BJ (cell line): ENCODE measurements at regions of chr2 and their contacts with region 1.

Region 1: DNA sequence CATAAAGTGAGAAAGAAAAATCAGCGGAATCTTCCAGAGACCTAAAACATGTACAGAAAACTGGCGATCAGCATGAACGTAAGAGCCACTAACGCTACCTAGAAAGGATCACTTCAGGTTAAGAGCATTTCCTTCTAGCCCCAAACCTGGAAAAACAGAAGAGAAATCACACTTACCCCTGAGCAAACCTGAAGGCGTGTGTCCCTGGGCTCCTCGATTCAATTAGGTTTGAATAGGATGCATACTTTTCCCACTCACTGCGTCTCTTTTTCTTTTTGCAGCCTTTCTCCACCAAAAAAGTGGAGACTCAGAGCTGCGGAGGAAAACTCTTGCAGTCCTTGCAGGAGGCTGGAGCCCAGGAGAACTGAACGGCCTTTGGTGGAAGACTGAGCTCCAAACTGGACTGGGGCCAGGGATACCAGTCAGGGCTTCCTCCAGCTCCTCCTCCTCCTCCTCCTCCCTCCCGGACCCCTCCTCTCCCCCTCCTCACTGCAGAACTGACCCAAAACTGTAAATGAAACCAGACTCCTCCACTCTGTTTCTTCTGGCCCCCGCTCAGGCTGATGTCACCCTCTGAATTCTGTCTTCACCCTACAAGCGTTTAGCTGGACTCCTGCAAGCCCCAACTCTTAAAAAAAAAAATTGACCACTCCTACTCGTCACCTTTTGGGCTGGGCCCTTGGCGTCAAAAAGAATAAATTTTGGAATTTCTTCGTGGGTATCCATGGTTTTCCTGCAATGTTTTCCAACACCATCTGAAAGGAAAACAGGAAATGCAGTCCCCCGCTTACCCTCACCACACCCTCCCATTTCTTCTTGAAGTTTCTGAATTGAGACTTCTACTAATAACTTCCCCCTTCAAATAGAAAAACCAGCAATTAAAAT is at the start of gene COL6A3:
- DNase-seq: peak; percentile 97
- H3K4me3 ChIP-seq: peak within 1 kb of the TSS; percentile 94
- H3K27me3 ChIP-seq: no peaks in the 10 kb centered on the region
- CTCF ChIP-seq: no peak
- polyA plus RNA-seq, gene COL6A3: 522 and 695 TPM in 2 replicates

Region 2: DNA sequence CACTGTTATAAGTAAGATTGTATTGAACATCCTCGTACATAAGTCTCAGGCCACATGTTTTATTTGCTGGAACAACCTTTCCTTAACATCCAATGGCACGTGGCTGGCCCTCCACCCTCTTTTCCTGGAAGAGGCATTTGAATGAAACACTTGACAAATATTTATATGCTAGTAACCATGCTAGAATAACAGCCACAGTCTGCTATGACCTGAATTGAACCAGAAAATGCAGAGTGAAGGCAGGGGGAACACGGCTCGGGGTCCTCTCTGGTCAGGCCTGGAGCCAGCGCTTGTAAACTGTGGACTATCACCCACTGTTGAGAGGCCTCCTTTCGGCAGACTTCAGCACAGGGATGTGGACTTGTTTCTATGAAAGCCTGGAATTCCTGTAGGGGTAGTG is 526.5 kb before region 1 on chr2:
- CTCF ChIA-PET with region 1: no interaction called
- POLR2A ChIA-PET with region 1: no interaction called
- DNase-seq: peak; percentile 83
- H3K4me3 ChIP-seq: no peak overlapping the region
- H3K27me3 ChIP-seq: no peaks in the 10 kb centered on the region
- CTCF ChIP-seq: peak; percentile 34

Region 3: GRCh38 chr2:237122214-237122666 is 291.8 kb before region 1 on chr2:
- CTCF ChIA-PET with region 1: interaction called, 12 read pairs
- POLR2A ChIA-PET with region 1: no interaction called
- DNase-seq: no peak
- H3K4me3 ChIP-seq: no peak overlapping the region
- H3K27me3 ChIP-seq: no peaks in the 10 kb centered on the region
- CTCF ChIP-seq: peak; percentile 84

Region 4: GRCh38 chr2:237154082-237154638 is 259.9 kb before region 1 on chr2:
- CTCF ChIA-PET with region 1: interaction called, 17 read pairs
- POLR2A ChIA-PET with region 1: interaction called, 3 read pairs
- DNase-seq: no peak
- H3K4me3 ChIP-seq: no peak overlapping the region
- H3K27me3 ChIP-seq: no peaks in the 10 kb centered on the region
- CTCF ChIP-seq: peak; percentile 79

Region 5: DNA sequence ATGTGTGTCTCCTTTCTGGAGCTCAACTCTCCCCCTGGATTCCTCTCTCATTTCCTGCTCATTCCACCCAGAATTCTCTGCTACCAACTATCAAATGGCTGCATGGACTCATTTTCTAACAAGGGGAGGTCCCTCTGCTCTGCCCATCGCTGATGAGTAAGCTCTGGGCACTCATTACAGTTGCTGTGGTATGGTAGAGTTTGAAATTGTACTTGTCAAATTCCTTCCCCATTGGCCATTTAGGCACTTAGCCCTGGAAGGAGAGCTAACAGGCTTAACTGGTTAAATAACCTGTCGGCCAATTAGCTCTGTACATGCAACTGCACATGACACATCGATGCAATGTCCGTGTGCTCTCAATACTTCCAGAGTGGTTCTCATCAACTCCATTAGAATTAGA is 20.5 kb before region 1 on chr2:
- CTCF ChIA-PET with region 1: no interaction called
- POLR2A ChIA-PET with region 1: interaction called, 12 read pairs
- DNase-seq: no peak
- H3K4me3 ChIP-seq: no peak overlapping the region
- H3K27me3 ChIP-seq: no peaks in the 10 kb centered on the region
- CTCF ChIP-seq: no peak